ENCODE measurements at regions of chr12 and their contacts with region 1.

Region 1: GRCh38 chr12:103530307-103531066 is 34.7 kb upstream of the C12orf42 start:
- DNase-seq: peak; percentile 21
- CTCF ChIP-seq: no peak

Region 2: GRCh38 chr12:103513875-103514274 is 16.6 kb before region 1 on chr12:
- CTCF ChIA-PET with region 1: interaction called, 13 read pairs
- POLR2A ChIA-PET with region 1: no interaction called
- DNase-seq: no peak
- CTCF ChIP-seq: no peak

Measured in GM10248 (cell line).